ENCODE measurements at regions of chr2 and their contacts with region 1.

Region 1: GRCh38 chr2:190880378-190881073 is at the start of gene GLS:
- DNase-seq: peak; percentile 98
- H3K4me3 Mint-ChIP-seq: peak within 1 kb of the TSS; percentile 89
- H3K27ac Mint-ChIP-seq: peak within 1 kb of the TSS; percentile 82
- H3K4me1 Mint-ChIP-seq: peaks cover 11% of the 10 kb centered on the region
- H3K27me3 Mint-ChIP-seq: no peaks in the 10 kb centered on the region
- CTCF ChIP-seq: no peak
- total RNA-seq, gene GLS: 107 and 121 TPM in 2 replicates

Region 2: GRCh38 chr2:190765386-190766173 is 114.9 kb before region 1 on chr2:
- CTCF ChIA-PET with region 1: no interaction called
- POLR2A ChIA-PET with region 1: no interaction called
- intact Hi-C with region 1: no loop called
- DNase-seq: peak; percentile 39
- H3K4me3 Mint-ChIP-seq: no peak overlapping the region
- H3K27ac Mint-ChIP-seq: no peak overlapping the region
- H3K4me1 Mint-ChIP-seq: peaks cover 6% of the 10 kb centered on the region
- H3K27me3 Mint-ChIP-seq: no peaks in the 10 kb centered on the region
- CTCF ChIP-seq: no peak

Region 3: DNA sequence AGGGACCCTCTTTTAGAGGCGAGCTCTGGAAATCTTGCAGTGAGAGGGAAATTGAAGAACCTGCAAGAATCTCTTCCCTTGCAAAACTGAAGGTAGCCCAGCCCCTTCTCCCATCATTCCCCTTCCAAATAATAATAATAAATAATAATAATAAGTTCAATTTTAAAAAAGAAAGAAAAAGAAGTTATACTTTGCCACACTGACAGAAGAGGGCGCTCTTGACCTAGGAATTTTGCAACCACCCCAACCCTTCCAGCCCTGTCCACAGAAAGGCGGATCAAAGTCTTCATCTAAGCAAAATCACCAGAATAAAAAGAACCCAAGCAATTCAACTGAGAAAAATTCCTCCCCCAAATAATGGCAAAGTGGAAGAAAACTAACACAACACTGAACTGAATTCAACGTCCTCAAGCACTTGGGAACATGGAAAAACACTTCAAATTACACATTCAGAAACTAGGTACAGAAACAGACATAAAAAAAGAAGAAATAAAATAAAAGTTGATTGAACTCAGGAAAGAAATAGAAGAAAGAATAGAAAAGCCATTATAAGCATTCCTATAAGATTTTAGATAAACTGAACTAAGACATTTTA is 98.8 kb before region 1 on chr2:
- CTCF ChIA-PET with region 1: interaction called, 5 read pairs
- POLR2A ChIA-PET with region 1: interaction called, 3 read pairs
- intact Hi-C with region 1: loop called (anchors 2 kb)
- DNase-seq: peak; percentile 59
- H3K4me3 Mint-ChIP-seq: no peak overlapping the region
- H3K27ac Mint-ChIP-seq: no peak overlapping the region
- H3K4me1 Mint-ChIP-seq: no peaks in the 10 kb centered on the region
- H3K27me3 Mint-ChIP-seq: no peaks in the 10 kb centered on the region
- CTCF ChIP-seq: peak; percentile 72

Region 4: GRCh38 chr2:190867212-190867611 is 13.3 kb before region 1 on chr2:
- CTCF ChIA-PET with region 1: interaction called, 3 read pairs
- POLR2A ChIA-PET with region 1: interaction called, 10 read pairs
- intact Hi-C with region 1: no loop called
- DNase-seq: no peak
- H3K4me3 Mint-ChIP-seq: no peak overlapping the region
- H3K27ac Mint-ChIP-seq: no peak overlapping the region
- H3K4me1 Mint-ChIP-seq: peaks cover 5% of the 10 kb centered on the region
- H3K27me3 Mint-ChIP-seq: no peaks in the 10 kb centered on the region
- CTCF ChIP-seq: no peak

Region 5: DNA sequence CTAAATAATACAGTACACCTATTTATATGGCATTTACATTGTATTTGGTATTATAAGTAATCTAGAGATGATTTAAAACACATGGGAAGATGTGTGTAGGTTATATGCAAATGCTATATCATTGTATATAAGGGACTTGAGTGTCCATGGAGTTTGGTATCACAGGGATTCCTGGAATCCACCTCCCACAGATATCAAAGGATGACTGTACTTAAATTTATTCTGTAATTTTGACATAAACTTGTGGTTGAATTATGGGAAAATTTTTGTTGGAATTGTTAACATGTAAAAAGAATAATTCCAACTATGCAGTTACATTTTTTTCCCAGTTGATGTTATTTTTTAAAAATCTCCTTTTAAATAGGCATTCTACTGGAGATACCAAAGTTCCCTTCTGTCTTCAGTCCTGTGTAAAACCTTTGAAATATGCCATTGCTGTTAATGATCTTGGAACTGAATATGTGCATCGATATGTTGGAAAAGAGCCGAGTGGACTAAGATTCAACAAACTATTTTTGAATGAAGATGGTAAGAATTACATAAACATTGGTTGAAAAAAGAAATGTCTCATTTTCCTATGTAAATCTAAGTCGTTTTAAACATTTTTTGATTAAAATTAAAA is 24.2 kb after region 1 on chr2:
- CTCF ChIA-PET with region 1: interaction called, 4 read pairs
- POLR2A ChIA-PET with region 1: interaction called, 18 read pairs
- intact Hi-C with region 1: no loop called
- DNase-seq: no peak
- H3K4me3 Mint-ChIP-seq: no peak overlapping the region
- H3K27ac Mint-ChIP-seq: no peak overlapping the region
- H3K4me1 Mint-ChIP-seq: no peaks in the 10 kb centered on the region
- H3K27me3 Mint-ChIP-seq: no peaks in the 10 kb centered on the region
- CTCF ChIP-seq: no peak

Region 6: GRCh38 chr2:190911813-190912212 is 31.3 kb after region 1 on chr2:
- CTCF ChIA-PET with region 1: no interaction called
- POLR2A ChIA-PET with region 1: interaction called, 15 read pairs
- intact Hi-C with region 1: no loop called
- DNase-seq: peak; percentile 23
- H3K4me3 Mint-ChIP-seq: no peak overlapping the region
- H3K27ac Mint-ChIP-seq: peak overlapping the region; percentile 33
- H3K4me1 Mint-ChIP-seq: peaks cover 12% of the 10 kb centered on the region
- H3K27me3 Mint-ChIP-seq: no peaks in the 10 kb centered on the region
- CTCF ChIP-seq: no peak

Region 7: DNA sequence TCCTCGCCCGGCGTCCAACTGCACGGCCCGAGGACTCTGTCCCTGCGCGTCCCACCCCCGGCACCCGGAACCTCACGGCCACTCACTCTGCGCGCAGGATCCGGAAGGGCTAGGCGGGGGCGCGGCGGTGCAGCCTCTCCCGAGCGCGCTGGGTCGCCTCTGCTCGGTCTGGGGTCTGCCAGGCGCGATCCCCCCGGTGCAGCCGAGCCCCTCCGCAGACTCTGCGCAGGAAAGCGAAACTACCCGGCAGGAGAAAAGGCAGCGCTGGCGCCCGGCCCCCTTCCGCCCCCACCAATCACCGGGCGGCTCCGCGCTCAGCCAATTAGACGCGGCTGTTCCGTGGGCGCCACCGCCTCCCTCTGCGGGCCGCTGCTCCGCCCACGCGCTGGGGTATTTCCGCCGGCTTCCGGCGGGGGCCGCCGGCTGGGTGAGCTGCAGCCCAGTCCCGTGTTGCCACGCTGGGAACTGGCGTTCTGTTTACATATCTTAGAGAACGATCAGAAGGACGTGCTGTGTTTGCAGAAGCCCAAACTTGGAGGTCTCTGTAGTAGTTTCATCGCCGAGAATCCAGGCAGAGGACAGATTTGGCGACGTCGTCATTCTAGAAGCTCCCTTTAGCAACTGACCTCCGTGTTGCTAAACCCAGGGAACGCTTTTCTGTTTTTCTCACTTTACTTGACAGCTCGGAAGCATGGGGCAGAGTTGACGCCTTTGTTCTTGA is 133.6 kb after region 1 on chr2 and contains the start of gene STAT1:
- CTCF ChIA-PET with region 1: no interaction called
- POLR2A ChIA-PET with region 1: interaction called, 44 read pairs
- intact Hi-C with region 1: loop called (anchors 5 kb)
- DNase-seq: peak; percentile 90
- H3K4me3 Mint-ChIP-seq: no peak within 1 kb of the TSS
- H3K27ac Mint-ChIP-seq: no peak within 1 kb of the TSS
- H3K4me1 Mint-ChIP-seq: peaks cover 8% of the 10 kb centered on the region
- H3K27me3 Mint-ChIP-seq: peaks cover 11% of the 10 kb centered on the region
- CTCF ChIP-seq: no peak
- total RNA-seq, gene STAT1: 32.3 and 36.9 TPM in 2 replicates

Region 8: GRCh38 chr2:191020221-191020741 is 139.8 kb after region 1 on chr2:
- CTCF ChIA-PET with region 1: no interaction called
- POLR2A ChIA-PET with region 1: interaction called, 44 read pairs
- intact Hi-C with region 1: no loop called
- DNase-seq: peak; percentile 97
- H3K4me3 Mint-ChIP-seq: no peak overlapping the region
- H3K27ac Mint-ChIP-seq: no peak overlapping the region
- H3K4me1 Mint-ChIP-seq: no peaks in the 10 kb centered on the region
- H3K27me3 Mint-ChIP-seq: peaks cover 11% of the 10 kb centered on the region
- CTCF ChIP-seq: no peak